ENCODE measurements at regions of chr19 and their contacts with region 1.

Region 1: DNA sequence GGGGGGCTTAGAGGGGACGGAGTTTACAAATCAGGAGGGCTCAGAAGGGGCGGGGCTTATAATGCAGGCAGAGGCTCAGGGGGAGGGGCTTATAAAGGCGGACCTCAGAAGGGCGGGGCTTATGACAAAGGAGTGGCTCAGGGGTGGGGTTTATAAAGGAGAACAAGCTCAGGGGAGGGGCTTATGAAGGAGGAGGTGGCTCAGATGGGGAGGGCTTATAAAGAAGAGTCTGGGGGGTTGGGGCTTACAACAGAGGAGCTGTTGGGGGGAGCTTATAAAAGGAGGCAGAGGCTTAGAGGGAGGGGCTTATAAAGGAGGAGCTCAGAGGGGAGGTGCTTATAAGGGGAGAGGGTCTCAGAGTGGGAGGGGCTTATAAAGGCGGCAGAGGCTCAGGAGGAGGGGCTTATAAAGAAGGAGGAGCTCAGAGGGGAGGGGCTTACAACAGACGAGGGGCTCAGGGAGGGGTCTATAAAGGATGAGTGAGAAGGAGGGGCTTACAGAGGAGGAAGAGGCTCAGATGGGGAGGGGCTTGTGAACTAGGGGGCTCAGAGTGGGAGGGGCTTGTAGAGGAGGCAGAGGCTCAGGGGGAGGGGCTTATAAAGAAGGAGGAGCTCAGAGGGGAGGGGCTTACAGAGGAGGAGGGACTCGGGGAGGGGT is 1.0 kb downstream of the SMIM24 start:
- DNase-seq: peak; percentile 43 to 77 (median 50)
- H3K4me3 ChIP-seq: no peak overlapping the region
- H3K4me3 Mint-ChIP-seq: peak overlapping the region in 3 of 8 donors; percentile 51 to 75 (median 67)
- H3K27ac ChIP-seq: no peak overlapping the region
- H3K27ac Mint-ChIP-seq: peak overlapping the region in 3 of 7 donors; percentile 41 to 68 (median 66)
- H3K4me1 ChIP-seq: peaks cover 15% of the 10 kb centered on the region
- H3K4me1 Mint-ChIP-seq: peaks cover 4 to 17% (median 11%) of the 10 kb centered on the region in 4 donors
- H3K27me3 ChIP-seq: no peaks in the 10 kb centered on the region
- H3K27me3 Mint-ChIP-seq: no peaks in the 10 kb centered on the region

Region 2: GRCh38 chr19:3494051-3494450 is 14.7 kb after region 1 on chr19:
- CTCF ChIA-PET with region 1: interaction called, 39 read pairs
- POLR2A ChIA-PET with region 1: no interaction called
- intact Hi-C with region 1: no loop called
- DNase-seq: peak in 3 of 5 donors; percentile 16 to 32 (median 21)
- H3K4me3 ChIP-seq: no peak overlapping the region
- H3K4me3 Mint-ChIP-seq: peak overlapping the region in 3 of 8 donors; percentile 32 to 51 (median 41)
- H3K27ac ChIP-seq: no peak overlapping the region
- H3K27ac Mint-ChIP-seq: peak overlapping the region in 1 of 7 donors; percentile 57
- H3K4me1 ChIP-seq: peaks cover 14% of the 10 kb centered on the region
- H3K4me1 Mint-ChIP-seq: peaks cover 4 to 17% (median 9%) of the 10 kb centered on the region in 4 donors
- H3K27me3 ChIP-seq: no peaks in the 10 kb centered on the region
- H3K27me3 Mint-ChIP-seq: no peaks in the 10 kb centered on the region

Region 3: GRCh38 chr19:3500429-3501130 is 21.3 kb after region 1 on chr19 and contains the start of gene DOHH:
- CTCF ChIA-PET with region 1: interaction called, 39 read pairs
- POLR2A ChIA-PET with region 1: interaction called, 6 read pairs
- intact Hi-C with region 1: no loop called
- DNase-seq: peak; percentile 94 to 96 (median 95)
- H3K4me3 ChIP-seq: peak within 1 kb of the TSS; percentile 64 to 87
- H3K4me3 Mint-ChIP-seq: peak within 1 kb of the TSS; percentile 82 to 98 (median 93)
- H3K27ac ChIP-seq: peak within 1 kb of the TSS; percentile 85
- H3K27ac Mint-ChIP-seq: peak within 1 kb of the TSS; percentile 91 to 100 (median 95)
- H3K4me1 ChIP-seq: peaks cover 32% of the 10 kb centered on the region
- H3K4me1 Mint-ChIP-seq: peaks cover 21 to 42% (median 26%) of the 10 kb centered on the region in 4 donors
- H3K27me3 ChIP-seq: no peaks in the 10 kb centered on the region
- H3K27me3 Mint-ChIP-seq: no peaks in the 10 kb centered on the region
- total RNA-seq, gene DOHH: 8.3 TPM

Region 4: DNA sequence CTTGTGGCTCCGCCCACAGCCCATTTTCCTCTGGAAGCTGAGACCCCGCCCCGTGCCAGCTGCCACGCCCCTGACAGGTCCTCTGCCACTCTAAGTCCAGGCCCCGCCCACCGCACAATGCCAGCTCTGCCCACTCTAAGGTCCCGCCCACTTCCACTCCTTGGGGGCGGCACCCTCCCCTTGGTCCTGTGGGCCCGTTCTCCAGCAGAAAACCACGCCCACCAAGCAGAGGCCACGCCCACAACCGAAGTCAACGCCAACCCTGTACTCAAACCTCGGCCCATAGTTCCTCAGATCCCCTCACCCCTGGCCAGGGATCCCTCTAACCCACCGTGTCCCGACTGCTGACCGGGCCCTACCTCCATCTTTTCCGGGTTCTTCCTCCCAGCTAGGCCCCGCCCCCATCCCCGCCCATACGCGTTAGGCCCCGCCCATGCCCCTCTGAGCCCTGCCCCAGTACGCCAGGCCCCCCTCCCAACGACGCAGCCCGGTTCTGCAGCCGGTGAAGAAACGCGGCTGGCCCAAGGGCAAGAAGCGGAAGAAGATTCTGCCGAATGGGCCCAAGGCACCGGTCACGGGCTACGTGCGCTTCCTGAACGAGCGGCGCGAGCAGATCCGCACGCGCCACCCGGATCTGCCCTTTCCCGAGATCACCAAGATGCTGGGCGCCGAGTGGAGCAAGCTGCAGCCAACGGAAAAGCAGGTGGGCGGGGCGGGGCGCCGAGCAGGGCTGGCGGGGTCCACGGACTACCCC is 94.8 kb after region 1 on chr19:
- CTCF ChIA-PET with region 1: no interaction called
- POLR2A ChIA-PET with region 1: no interaction called
- intact Hi-C with region 1: no loop called
- DNase-seq: peak; percentile 67 to 88 (median 78)
- H3K4me3 ChIP-seq: peak overlapping the region in 1 of 2 donors; percentile 68
- H3K4me3 Mint-ChIP-seq: peak overlapping the region; percentile 72 to 83 (median 76)
- H3K27ac ChIP-seq: peak overlapping the region; percentile 64
- H3K27ac Mint-ChIP-seq: peak overlapping the region in 6 of 7 donors; percentile 36 to 91 (median 71)
- H3K4me1 ChIP-seq: peaks cover 15% of the 10 kb centered on the region
- H3K4me1 Mint-ChIP-seq: peaks cover 5 to 23% (median 17%) of the 10 kb centered on the region in 4 donors
- H3K27me3 ChIP-seq: no peaks in the 10 kb centered on the region
- H3K27me3 Mint-ChIP-seq: no peaks in the 10 kb centered on the region

Measured in CD4-positive, alpha-beta memory T cell (primary cell).